ENCODE measurements at regions of chr17 and their contacts with region 1.

Region 1: GRCh38 chr17:50865984-50866774 is at the start of gene TOB1:
- DNase-seq: peak; percentile 90 to 98
- ATAC-seq: peak; percentile 72 to 86
- H3K4me3 ChIP-seq: peak within 1 kb of the TSS; percentile 92
- H3K27ac ChIP-seq: peak within 1 kb of the TSS; percentile 97 to 98
- H3K4me1 ChIP-seq: peaks cover 36% of the 10 kb centered on the region
- CTCF ChIP-seq: no peak
- EP300 ChIP-seq: 0 out of 5 replicates have a peak, but pooled peaks of 1 of the 2 experiments have one; percentile 36
- POLR2A ChIP-seq: peak; percentile 100
- RAD21 ChIP-seq: peak; percentile 7 to 8; a peak in 3 of 5 replicates
- polyA plus RNA-seq, gene TOB1: 101 and 133 TPM in 2 replicates

Region 2: DNA sequence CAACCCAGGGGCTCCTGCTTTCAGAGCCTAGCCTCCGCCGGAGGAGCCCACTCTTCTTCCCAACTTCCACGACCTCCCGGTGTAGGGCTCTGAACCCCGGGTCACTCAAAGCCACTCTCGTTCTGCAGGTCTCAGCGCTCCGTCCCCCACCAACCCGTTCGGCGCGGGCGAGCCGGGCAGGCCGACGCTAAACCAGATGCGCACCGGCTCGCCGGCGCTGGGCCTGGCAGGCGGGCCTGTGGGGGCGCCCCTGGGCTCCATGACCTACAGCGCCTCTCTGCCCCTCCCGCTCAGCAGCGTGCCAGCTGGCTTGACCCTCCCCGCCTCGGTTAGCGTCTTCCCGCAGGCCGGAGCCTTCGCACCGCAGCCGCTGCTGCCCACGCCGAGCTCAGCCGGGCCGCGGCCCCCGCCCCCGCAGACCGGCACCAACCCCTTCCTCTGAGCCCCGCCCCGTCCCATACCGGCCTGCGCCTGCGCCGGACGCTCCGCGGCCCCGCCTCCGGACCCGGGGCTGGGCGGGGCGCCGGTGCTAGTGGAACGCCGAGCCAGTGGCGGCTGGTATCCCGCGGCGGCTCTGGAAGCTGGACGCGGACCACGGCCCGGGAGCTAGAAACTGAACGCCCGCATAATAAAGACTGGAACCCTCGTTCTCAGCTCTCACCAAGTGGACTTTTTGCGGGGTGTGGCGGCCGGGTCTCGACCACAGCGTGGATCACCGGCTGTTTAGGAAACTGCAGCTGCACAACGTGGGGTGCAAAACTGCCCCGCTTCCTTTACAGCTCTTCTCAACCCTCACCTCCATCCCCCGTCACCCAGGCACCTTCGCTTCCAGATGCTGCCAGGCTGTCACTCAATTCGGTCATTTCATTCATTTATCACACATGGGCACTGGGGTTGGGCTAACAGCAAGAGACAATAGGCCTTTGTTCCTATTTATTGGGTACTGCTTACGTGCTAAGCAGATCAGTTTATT is 324.2 kb before region 1 on chr17:
- CTCF ChIA-PET with region 1: interaction called, 3 read pairs
- POLR2A ChIA-PET with region 1: interaction called, 24 read pairs
- DNase-seq: peak; percentile 80 to 96
- ATAC-seq: peak; percentile 71 to 85
- H3K4me3 ChIP-seq: peak overlapping the region; percentile 51
- H3K27ac ChIP-seq: peak overlapping the region; percentile 85 to 90
- H3K4me1 ChIP-seq: peaks cover 45% of the 10 kb centered on the region
- CTCF ChIP-seq: peak; percentile 28; the same call in 1 of the 3 replicates
- EP300 ChIP-seq: no peak
- POLR2A ChIP-seq: peak; percentile 92
- RAD21 ChIP-seq: peak in 1 of 2 experiments; percentile 22; a peak in 1 of 5 replicates

Region 3: DNA sequence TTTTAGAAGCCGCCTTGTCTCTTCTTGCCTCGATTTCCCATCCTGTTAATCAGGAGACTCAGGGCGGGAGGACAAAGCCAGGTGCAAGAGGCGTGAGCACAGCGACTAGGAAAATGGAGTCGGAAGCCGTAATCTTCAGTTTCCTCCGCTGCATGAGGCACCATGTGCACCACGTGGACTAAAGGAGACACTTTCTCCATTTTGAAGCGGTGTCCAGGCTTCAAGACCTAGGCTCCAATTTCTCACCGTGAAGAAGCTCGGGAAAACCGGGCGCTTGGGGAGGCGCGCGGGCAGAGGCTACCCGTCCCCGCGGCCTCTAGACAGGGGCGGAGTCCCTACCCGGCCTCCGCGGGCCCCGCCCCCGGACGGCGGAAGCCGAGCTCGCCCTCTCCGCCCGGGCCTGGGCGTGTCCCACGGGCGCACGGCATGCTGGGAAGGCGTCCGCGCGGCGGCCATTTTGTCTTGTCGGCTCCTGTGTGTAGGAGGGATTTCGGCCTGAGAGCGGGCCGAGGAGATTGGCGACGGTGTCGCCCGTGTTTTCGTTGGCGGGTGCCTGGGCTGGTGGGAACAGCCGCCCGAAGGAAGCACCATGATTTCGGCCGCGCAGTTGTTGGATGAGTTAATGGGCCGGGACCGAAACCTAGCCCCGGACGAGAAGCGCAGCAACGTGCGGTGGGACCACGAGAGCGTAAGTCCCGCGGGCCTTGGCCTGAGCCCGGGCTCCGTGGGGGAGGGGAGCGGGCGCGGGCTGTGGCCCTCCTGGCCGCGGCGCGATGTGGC is 146.8 kb before region 1 on chr17 and contains the start of gene LUC7L3:
- CTCF ChIA-PET with region 1: no interaction called
- POLR2A ChIA-PET with region 1: interaction called, 14 read pairs
- DNase-seq: peak; percentile 95 to 98
- ATAC-seq: peak; percentile 92 to 95
- H3K4me3 ChIP-seq: peak within 1 kb of the TSS; percentile 66
- H3K27ac ChIP-seq: peak within 1 kb of the TSS; percentile 85 to 95
- H3K4me1 ChIP-seq: peaks cover 33% of the 10 kb centered on the region
- CTCF ChIP-seq: no peak
- EP300 ChIP-seq: no peak
- POLR2A ChIP-seq: peak; percentile 80
- RAD21 ChIP-seq: no peak
- polyA plus RNA-seq, gene LUC7L3: 117 and 209 TPM in 2 replicates

Region 4: DNA sequence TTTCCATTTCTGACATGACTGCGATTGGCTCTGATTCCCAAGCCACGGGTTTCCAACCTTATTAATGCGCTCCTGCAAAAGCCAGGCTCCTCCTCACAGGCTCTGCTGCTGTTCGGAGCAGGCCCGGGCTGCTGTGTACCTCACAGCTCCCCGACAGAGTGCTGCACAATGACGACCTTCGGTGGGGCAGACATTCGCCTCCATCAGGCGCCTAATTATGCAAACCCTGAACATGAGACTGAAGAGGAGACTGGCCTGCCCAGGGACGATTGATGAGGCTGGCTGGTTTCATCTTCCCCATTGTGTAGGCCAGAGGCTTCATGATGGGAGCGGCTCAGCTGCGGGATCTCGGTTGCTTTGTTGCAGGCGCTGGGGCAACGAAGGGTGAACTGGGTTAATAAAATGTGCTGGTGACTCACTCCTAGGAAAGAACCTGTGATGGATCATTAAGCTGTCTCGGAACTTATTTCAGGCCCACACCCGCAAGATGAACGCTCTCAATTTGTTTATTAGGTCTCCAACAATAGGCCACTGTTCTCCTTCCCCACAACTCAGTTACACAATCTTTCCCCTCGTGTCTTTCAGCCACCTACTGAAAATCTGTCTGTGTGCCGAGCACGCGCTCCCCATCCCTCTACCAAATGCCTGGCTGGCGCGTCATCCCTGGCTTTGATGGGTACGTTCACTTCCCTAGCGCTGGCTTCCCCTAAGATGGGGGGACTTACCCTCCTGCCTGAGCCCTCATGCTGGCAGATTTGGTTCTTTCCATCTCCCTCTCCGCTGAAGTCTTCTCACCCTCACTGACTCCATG is 27.2 kb after region 1 on chr17:
- CTCF ChIA-PET with region 1: interaction called, 3 read pairs
- POLR2A ChIA-PET with region 1: interaction called, 133 read pairs
- DNase-seq: peak; percentile 55 to 68
- ATAC-seq: peak; percentile 24 to 48; a peak in 4 of 6 replicates
- H3K4me3 ChIP-seq: no peak overlapping the region
- H3K27ac ChIP-seq: peak overlapping the region; percentile 22 to 66; a peak in 4 of 6 replicates
- H3K4me1 ChIP-seq: peaks cover 45% of the 10 kb centered on the region
- CTCF ChIP-seq: no peak
- EP300 ChIP-seq: no peak
- POLR2A ChIP-seq: no peak
- RAD21 ChIP-seq: no peak

Region 5: GRCh38 chr17:50919321-50920085 is 53.3 kb after region 1 on chr17:
- CTCF ChIA-PET with region 1: interaction called, 12 read pairs
- POLR2A ChIA-PET with region 1: interaction called, 130 read pairs
- DNase-seq: peak; percentile 96 to 99
- ATAC-seq: peak; percentile 92 to 93
- H3K4me3 ChIP-seq: no peak overlapping the region
- H3K27ac ChIP-seq: peak overlapping the region; percentile 87 to 92
- H3K4me1 ChIP-seq: peaks cover 79% of the 10 kb centered on the region
- CTCF ChIP-seq: no peak
- EP300 ChIP-seq: no peak
- POLR2A ChIP-seq: peak; percentile 25; the same call in 1 of the 2 replicates
- RAD21 ChIP-seq: peak; percentile 8 to 31; a peak in 1 of 5 replicates

Region 6: GRCh38 chr17:50956750-50957523 is 90.8 kb after region 1 on chr17:
- CTCF ChIA-PET with region 1: interaction called, 1,502 read pairs
- POLR2A ChIA-PET with region 1: interaction called, 648 read pairs
- DNase-seq: peak; percentile 69 to 71
- ATAC-seq: peak; percentile 73 to 87
- H3K4me3 ChIP-seq: no peak overlapping the region
- H3K27ac ChIP-seq: peak overlapping the region; percentile 29 to 81; a peak in 3 of 6 replicates
- H3K4me1 ChIP-seq: peaks cover 23% of the 10 kb centered on the region
- CTCF ChIP-seq: peak; percentile 87
- EP300 ChIP-seq: no peak
- POLR2A ChIP-seq: no peak
- RAD21 ChIP-seq: peak; percentile 80 to 85

Measured in A549 (cell line).